ENCODE measurements at regions of chr12 and their contacts with region 1.

Region 1: DNA sequence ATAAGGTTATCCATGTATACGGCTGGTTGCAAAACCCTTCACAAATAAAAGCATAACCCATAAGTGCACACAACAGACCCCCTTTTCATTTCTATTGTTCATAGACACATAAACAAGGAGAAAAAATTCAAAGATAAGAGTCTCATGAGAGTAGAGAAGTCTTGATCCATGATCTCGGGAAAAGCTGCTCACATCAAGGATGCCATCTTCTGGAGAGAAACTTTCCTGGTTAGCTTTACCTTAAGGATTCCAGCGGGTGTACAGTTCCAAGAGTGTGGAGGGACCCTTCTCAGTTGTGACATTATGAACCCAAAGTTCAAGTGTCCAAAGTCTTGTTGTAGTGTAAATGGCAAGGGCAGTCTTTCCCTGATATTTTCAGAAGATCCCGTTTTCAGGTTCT is 144.5 kb downstream of the LLPH start:
- DNase-seq: no peak
- ATAC-seq: no peak
- H3K4me3 ChIP-seq: no peak overlapping the region
- H3K27ac ChIP-seq: no peak overlapping the region
- H3K4me1 ChIP-seq: no peaks in the 10 kb centered on the region
- H3K27me3 ChIP-seq: no peaks in the 10 kb centered on the region
- CTCF ChIP-seq: no peak
- EP300 ChIP-seq: no peak
- POLR2A ChIP-seq: no peak
- RAD21 ChIP-seq: no peak

Region 2: GRCh38 chr12:66107451-66107915 is 121.4 kb after region 1 on chr12:
- CTCF ChIA-PET with region 1: no interaction called
- POLR2A ChIA-PET with region 1: no interaction called
- in situ Hi-C with region 1: no loop called
- intact Hi-C with region 1: loop called (anchors 10 kb)
- DNase-seq: peak; percentile 69 to 86 (median 73)
- ATAC-seq: peak; percentile 99
- H3K4me3 ChIP-seq: no peak overlapping the region
- H3K27ac ChIP-seq: no peak overlapping the region
- H3K4me1 ChIP-seq: no peaks in the 10 kb centered on the region
- H3K27me3 ChIP-seq: no peaks in the 10 kb centered on the region
- CTCF ChIP-seq: peak; percentile 68 to 74 (median 69)
- EP300 ChIP-seq: no peak
- POLR2A ChIP-seq: no peak
- RAD21 ChIP-seq: peak; percentile 50 to 71